PC-9 (cell line): ENCODE measurements at regions of chr14 and their contacts with region 1.

Region 1: DNA sequence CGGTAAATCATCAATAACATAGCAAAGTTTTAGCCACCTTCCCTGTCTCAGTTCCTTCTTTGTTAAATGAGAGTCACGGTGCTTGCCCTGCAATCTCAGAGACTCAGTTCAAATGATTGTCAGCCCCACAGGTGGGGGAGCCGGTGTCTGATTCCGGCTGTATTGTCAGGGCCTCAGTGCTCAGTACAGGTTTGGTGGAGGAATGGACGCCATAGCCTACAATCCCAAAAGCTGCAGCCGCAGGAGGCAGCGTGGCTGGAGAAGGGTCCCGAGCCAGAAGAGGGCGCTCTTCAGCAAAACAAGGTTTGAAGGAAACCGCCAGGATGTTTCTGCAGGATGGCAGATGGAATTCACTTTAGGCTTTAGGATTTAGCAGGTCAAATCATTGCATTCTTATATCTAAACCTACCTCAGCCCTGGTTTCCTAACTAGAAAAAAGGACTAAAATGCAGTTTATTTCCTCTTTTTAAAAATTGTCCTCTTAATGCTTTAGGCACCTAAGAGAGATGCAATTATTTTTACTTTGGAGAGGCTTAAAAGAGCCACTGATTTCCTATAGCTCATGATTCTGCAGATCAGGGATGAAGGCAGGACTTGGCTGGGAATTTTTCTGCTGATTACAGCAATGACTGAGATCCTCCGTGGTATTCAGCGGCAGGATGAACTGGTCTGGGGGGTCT is 29.2 kb downstream of the FOS start:
- DNase-seq: peak; percentile 77 to 97
- H3K4me3 ChIP-seq: no peak overlapping the region
- H3K27ac ChIP-seq: no peak overlapping the region
- H3K4me1 ChIP-seq: peaks cover 15% of the 10 kb centered on the region
- H3K27me3 ChIP-seq: no peaks in the 10 kb centered on the region
- CTCF ChIP-seq: peak; percentile 99

Region 2: DNA sequence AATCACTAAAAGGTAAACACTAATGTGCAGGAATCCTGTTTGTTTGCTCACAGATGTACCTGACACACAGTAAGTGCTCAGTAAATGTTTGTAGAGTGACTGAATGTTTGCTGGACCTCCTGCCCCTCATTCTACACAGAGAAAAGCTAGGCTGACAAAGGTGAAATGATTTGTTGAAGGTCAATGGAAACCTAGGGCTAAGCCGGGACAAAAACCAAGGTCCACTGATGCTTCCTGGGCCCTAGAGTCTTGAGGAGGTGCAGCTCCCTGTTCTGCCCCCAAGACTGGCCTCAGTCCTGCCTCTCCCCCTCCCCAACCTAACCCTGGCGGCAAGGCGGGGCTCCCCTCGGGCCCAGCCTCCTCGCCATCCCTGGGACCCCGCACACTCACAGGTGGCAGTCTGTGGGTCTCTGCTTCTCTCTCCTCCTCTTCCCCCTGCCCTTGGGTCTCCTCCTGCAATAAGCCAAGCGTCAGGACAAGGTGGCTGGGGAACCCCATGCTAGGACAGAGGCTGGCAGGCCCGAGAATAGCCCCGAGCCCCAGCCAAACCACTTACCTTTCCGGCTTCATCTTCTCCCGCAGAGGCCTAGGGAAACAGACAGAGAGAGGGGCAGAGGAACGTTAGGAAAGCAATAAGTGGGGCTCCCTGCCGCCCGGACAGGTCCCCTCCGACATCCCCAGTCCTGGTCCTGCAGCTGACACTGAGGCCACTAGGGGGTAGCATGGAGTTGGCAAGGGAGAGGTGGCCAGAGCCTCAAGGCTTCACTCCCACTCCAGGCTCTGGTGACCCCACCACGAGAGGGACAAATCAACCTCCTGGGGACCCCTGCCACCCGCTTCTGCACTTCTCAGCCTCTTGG is 361.8 kb before region 1 on chr14:
- CTCF ChIA-PET with region 1: no interaction called
- POLR2A ChIA-PET with region 1: no interaction called
- intact Hi-C with region 1: loop called (anchors 10 kb)
- DNase-seq: peak; percentile 73 to 91
- H3K4me3 ChIP-seq: no peak overlapping the region
- H3K27ac ChIP-seq: no peak overlapping the region
- H3K4me1 ChIP-seq: peaks cover 9% of the 10 kb centered on the region; the same call in 1 of the 2 replicates
- H3K27me3 ChIP-seq: no peaks in the 10 kb centered on the region
- CTCF ChIP-seq: peak; percentile 99

Region 3: GRCh38 chr14:74973003-74973653 is 334.7 kb before region 1 on chr14:
- CTCF ChIA-PET with region 1: no interaction called
- POLR2A ChIA-PET with region 1: no interaction called
- intact Hi-C with region 1: no loop called
- DNase-seq: peak in 1 of 2 experiments; percentile 83
- H3K4me3 ChIP-seq: no peak overlapping the region
- H3K27ac ChIP-seq: no peak overlapping the region
- H3K4me1 ChIP-seq: peaks cover 8% of the 10 kb centered on the region; the same call in 1 of the 2 replicates
- H3K27me3 ChIP-seq: no peaks in the 10 kb centered on the region
- CTCF ChIP-seq: no peak

Region 4: GRCh38 chr14:75399821-75400678 is 92.2 kb after region 1 on chr14:
- CTCF ChIA-PET with region 1: interaction called, 3 read pairs
- POLR2A ChIA-PET with region 1: no interaction called
- intact Hi-C with region 1: loop called (anchors 1 kb)
- DNase-seq: peak; percentile 100
- H3K4me3 ChIP-seq: peak overlapping the region; percentile 17; the same call in 1 of the 2 replicates
- H3K27ac ChIP-seq: peak overlapping the region; percentile 70
- H3K4me1 ChIP-seq: peaks cover 31% of the 10 kb centered on the region
- H3K27me3 ChIP-seq: no peaks in the 10 kb centered on the region
- CTCF ChIP-seq: no peak

Region 5: GRCh38 chr14:75459099-75459741 is 151.4 kb after region 1 on chr14:
- CTCF ChIA-PET with region 1: interaction called, 4 read pairs
- POLR2A ChIA-PET with region 1: interaction called, 13 read pairs
- intact Hi-C with region 1: loop called (anchors 1 kb)
- DNase-seq: peak; percentile 99 to 100
- H3K4me3 ChIP-seq: no peak overlapping the region; the same call in 1 of the 2 replicates
- H3K27ac ChIP-seq: peak overlapping the region; percentile 94
- H3K4me1 ChIP-seq: peaks cover 84% of the 10 kb centered on the region
- H3K27me3 ChIP-seq: no peaks in the 10 kb centered on the region
- CTCF ChIP-seq: no peak

Region 6: GRCh38 chr14:75560962-75561432 is 253.2 kb after region 1 on chr14:
- CTCF ChIA-PET with region 1: interaction called, 24 read pairs
- POLR2A ChIA-PET with region 1: no interaction called
- intact Hi-C with region 1: loop called (anchors 1 kb)
- DNase-seq: peak; percentile 90 to 98
- H3K4me3 ChIP-seq: no peak overlapping the region
- H3K27ac ChIP-seq: peak overlapping the region; percentile 89
- H3K4me1 ChIP-seq: peaks cover 57% of the 10 kb centered on the region
- H3K27me3 ChIP-seq: no peaks in the 10 kb centered on the region
- CTCF ChIP-seq: peak; percentile 99

Region 7: GRCh38 chr14:75794615-75795038 is 486.8 kb after region 1 on chr14:
- CTCF ChIA-PET with region 1: interaction called, 3 read pairs
- POLR2A ChIA-PET with region 1: no interaction called
- intact Hi-C with region 1: loop called (anchors 1 kb)
- DNase-seq: peak in 1 of 2 experiments; percentile 11
- H3K4me3 ChIP-seq: no peak overlapping the region
- H3K27ac ChIP-seq: no peak overlapping the region
- H3K4me1 ChIP-seq: no peaks in the 10 kb centered on the region
- H3K27me3 ChIP-seq: no peaks in the 10 kb centered on the region
- CTCF ChIP-seq: peak; percentile 53

Region 8: DNA sequence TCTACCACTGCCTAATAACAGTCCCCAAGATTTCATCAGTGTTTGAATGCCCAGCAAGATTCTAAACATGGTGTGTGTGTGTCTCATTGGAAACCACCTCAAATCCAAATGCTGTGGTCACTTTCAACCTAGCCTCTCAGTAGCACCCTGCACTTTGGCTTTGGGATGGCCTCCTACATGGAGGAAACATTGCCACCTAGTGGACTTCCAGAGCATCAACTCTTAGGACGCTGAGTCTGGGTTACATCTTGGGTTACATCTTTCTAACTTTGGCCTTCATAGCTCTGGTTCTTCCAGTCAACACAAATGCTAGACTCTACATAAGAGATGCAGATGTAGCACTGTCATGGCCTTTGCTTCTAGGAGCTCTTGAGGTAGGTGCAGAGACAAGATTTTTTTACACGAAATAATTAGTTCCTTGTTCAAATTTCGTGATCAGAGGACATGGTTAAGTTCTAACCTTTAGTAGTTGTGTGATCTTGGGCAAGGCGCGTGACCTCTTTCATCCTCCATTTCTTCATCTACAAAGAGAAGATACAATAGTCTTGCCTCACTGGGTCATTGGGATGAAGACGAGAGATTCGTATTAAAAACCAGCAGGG is 1340.0 kb after region 1 on chr14:
- CTCF ChIA-PET with region 1: no interaction called
- POLR2A ChIA-PET with region 1: no interaction called
- intact Hi-C with region 1: loop called (anchors 10 kb)
- DNase-seq: peak; percentile 47 to 52
- H3K4me3 ChIP-seq: no peak overlapping the region
- H3K27ac ChIP-seq: no peak overlapping the region
- H3K4me1 ChIP-seq: no peaks in the 10 kb centered on the region
- H3K27me3 ChIP-seq: peaks cover 89% of the 10 kb centered on the region
- CTCF ChIP-seq: peak; percentile 95